ENCODE measurements at regions of chr17 and their contacts with region 1.

Region 1: GRCh38 chr17:35808962-35809854 is at the start of gene TAF15:
- DNase-seq: peak; percentile 98
- H3K4me3 Mint-ChIP-seq: peak within 1 kb of the TSS; percentile 83
- H3K27ac Mint-ChIP-seq: peak within 1 kb of the TSS; percentile 99
- H3K4me1 Mint-ChIP-seq: peaks cover 55% of the 10 kb centered on the region
- H3K27me3 Mint-ChIP-seq: no peaks in the 10 kb centered on the region
- total RNA-seq, gene TAF15: 252 to 256 TPM

Region 2: DNA sequence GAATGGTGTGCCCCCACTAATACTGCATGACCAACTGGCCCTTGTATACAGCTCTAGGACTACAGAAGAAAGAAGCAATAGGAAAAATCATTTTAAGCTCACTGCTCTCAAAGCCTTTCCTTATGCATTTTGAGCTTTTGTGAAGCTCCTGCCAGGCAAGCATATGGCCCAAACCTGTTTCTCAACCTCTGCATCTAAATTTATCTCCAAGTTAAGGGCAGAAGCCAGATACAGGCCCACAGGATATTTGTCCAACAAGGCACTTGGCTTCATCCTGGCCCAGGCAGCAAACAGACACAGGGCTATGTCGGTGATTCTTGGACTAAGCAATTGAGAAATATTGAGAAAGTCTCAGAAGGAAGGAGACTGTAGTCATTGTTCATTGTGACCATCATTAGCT is 891.8 kb before region 1 on chr17:
- CTCF ChIA-PET with region 1: no interaction called
- intact Hi-C with region 1: no loop called
- DNase-seq: no peak
- H3K4me3 Mint-ChIP-seq: no peak overlapping the region
- H3K27ac Mint-ChIP-seq: no peak overlapping the region
- H3K4me1 Mint-ChIP-seq: no peaks in the 10 kb centered on the region
- H3K27me3 Mint-ChIP-seq: no peaks in the 10 kb centered on the region

Region 3: GRCh38 chr17:35170968-35171771 is 638.0 kb before region 1 on chr17:
- CTCF ChIA-PET with region 1: interaction called, 3 read pairs
- intact Hi-C with region 1: loop called (anchors 10 kb)
- DNase-seq: no peak
- H3K4me3 Mint-ChIP-seq: no peak overlapping the region
- H3K27ac Mint-ChIP-seq: peak overlapping the region; percentile 61
- H3K4me1 Mint-ChIP-seq: peaks cover 33% of the 10 kb centered on the region
- H3K27me3 Mint-ChIP-seq: no peaks in the 10 kb centered on the region

Region 4: GRCh38 chr17:35448214-35448898 is 360.9 kb before region 1 on chr17 and contains the start of gene SLFN13:
- CTCF ChIA-PET with region 1: no interaction called
- intact Hi-C with region 1: loop called (anchors 5 kb)
- DNase-seq: peak; percentile 98
- H3K4me3 Mint-ChIP-seq: peak within 1 kb of the TSS; percentile 52
- H3K27ac Mint-ChIP-seq: peak within 1 kb of the TSS; percentile 13
- H3K4me1 Mint-ChIP-seq: peaks cover 12% of the 10 kb centered on the region
- H3K27me3 Mint-ChIP-seq: no peaks in the 10 kb centered on the region
- total RNA-seq, gene SLFN13: 28.6 to 30.1 TPM

Region 5: GRCh38 chr17:35587074-35587971 is 221.9 kb before region 1 on chr17 and contains the start of gene AP2B1:
- CTCF ChIA-PET with region 1: interaction called, 3 read pairs
- intact Hi-C with region 1: loop called (anchors 2 kb)
- DNase-seq: peak; percentile 97
- H3K4me3 Mint-ChIP-seq: peak within 1 kb of the TSS; percentile 97
- H3K27ac Mint-ChIP-seq: peak within 1 kb of the TSS; percentile 97
- H3K4me1 Mint-ChIP-seq: peaks cover 29% of the 10 kb centered on the region
- H3K27me3 Mint-ChIP-seq: no peaks in the 10 kb centered on the region
- total RNA-seq, gene AP2B1: 158 to 172 TPM

Region 6: DNA sequence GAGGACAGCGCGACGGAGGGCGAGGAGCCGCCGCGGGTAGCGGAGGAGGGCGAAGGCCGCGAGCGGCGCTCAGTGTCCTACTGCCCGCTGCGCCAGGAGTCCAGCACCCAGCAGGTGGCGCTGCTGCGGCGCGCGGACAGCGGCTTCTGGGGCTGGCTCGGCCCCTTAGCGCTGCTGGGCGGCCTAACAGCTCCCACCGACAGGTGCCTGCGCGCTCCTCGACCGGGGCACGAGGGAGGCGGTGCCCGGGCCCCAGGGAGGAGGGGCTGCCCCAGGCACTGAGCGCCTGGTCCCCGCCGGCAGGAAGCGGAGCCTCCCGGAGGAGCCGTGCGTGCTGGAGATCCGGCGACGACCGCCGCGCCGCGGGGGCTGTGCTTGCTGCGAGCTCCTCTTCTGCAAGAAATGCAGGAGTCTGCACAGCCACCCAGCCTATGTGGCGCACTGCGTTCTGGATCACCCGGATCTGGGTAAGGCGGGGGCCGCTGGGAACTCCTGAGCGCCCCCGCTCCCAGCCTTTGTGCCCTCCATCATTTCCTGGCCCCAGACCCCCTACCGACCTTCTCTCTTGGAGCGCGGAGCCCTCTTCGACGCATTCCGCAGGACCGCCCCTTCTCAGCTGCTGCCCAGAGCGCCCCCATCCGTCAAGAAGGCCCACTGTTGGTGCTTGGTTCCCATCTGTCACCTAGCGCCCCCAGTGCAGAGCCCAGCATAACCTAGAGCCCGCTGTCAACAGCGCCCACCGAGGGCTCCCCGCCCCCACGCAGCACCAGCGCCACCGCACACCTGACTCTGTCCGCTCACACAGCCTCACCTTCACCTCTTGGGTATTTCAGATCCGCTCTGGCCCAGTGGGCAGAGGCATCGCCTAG is 44.9 kb before region 1 on chr17:
- CTCF ChIA-PET with region 1: interaction called, 284 read pairs
- intact Hi-C with region 1: loop called (anchors 1 kb)
- DNase-seq: peak; percentile 84
- H3K4me3 Mint-ChIP-seq: peak overlapping the region; percentile 79
- H3K27ac Mint-ChIP-seq: no peak overlapping the region
- H3K4me1 Mint-ChIP-seq: peaks cover 8% of the 10 kb centered on the region
- H3K27me3 Mint-ChIP-seq: no peaks in the 10 kb centered on the region

Region 7: DNA sequence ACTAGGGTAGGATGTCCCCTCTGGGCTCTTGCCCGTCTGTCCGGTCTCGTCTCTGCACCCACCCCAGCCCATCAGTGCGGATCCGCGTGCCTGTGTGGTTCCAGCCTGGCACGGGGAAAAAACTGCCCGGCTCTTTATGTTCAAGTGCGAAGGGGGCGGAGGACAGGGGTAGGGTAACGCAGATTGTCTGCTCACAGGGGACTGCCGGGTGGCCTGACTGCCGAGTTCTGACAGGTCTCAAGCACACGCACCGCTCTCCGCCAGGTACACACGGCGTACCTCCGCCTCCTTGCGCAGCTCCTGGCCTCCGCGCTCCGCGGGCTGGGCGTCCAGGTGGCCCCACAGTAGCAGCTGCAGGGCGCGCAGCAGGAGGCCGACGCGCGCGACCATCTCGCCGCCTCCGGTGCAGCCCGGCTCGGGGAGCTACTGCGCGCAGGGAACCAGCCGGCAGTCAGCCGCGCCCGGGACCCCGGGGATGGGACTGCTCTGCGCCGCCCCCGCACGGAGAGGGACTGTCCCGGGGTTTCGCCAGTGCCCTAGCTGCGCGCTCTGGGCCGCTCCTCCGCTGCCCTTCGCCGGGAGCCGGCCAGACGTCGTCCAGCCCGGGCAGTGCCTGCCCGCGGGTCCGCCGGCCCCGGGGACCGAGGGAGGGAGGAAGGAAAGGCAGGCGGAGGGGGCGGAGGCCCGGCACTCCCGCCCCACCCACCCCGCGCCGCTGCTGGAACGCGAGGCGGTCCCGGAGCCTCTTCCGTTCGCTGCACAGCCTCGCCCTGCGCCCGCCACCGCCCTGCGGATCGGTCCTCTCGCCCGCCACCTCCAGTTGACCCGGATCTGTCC is 14.0 kb before region 1 on chr17 and contains the start of gene MMP28:
- CTCF ChIA-PET with region 1: interaction called, 12 read pairs
- intact Hi-C with region 1: no loop called
- DNase-seq: peak; percentile 44
- H3K4me3 Mint-ChIP-seq: peak within 1 kb of the TSS; percentile 73
- H3K27ac Mint-ChIP-seq: no peak within 1 kb of the TSS
- H3K4me1 Mint-ChIP-seq: peaks cover 27% of the 10 kb centered on the region
- H3K27me3 Mint-ChIP-seq: peaks cover 21% of the 10 kb centered on the region
- total RNA-seq, gene MMP28: 0.19 to 0.35 TPM